Ovary (tissue), 10 donors: ENCODE measurements at regions of chr7 and their contacts with region 1.

Region 1: GRCh38 chr7:45638916-45639315 is 64.7 kb downstream of the ADCY1 start:
- DNase-seq: no peak
- H3K4me3 ChIP-seq: no peak overlapping the region
- H3K27ac ChIP-seq: no peak overlapping the region
- H3K4me1 ChIP-seq: no peaks in the 10 kb centered on the region
- H3K27me3 ChIP-seq: no peaks in the 10 kb centered on the region
- CTCF ChIP-seq: no peak
- EP300 ChIP-seq: no peak
- POLR2A ChIP-seq: no peak

Region 2: DNA sequence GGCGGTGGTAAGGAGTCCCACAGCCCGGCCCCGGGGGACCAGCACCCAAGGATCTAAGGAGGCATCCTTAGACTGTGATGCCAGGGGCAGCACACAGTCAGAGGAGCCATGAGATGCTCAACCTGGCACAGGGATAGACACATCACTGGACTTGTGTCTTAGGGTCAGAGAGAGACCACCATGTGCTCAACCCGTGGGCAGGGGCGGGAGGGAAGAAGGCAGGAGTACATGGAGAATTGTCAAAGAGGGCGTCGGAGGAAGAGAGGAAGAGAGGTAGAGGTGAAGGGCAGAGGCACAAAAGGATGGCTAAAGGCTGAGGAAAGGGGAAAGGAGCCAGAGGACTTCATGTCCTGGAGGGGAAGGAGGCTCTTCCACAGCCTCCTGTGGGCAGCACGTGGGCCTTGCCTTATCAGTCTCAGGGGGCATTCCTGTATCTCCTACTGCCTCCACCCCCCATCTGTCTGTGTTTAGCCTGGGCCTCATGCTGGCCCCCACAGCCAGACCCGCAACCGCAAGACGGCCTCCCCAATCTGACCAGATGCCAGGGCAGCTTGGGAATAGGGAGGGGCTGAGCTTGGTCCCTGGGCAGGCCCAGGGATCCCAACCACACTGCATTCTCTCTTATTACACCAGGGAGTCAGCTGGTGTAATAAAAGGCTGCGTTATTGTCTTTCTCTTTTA is 62.5 kb before region 1 on chr7:
- intact Hi-C with region 1: loop called in 1 of 4 experiments (anchors 2 kb)
- DNase-seq: no peak
- H3K4me3 ChIP-seq: no peak overlapping the region
- H3K27ac ChIP-seq: no peak overlapping the region
- H3K4me1 ChIP-seq: peaks cover 3% of the 10 kb centered on the region
- H3K27me3 ChIP-seq: no peaks in the 10 kb centered on the region
- CTCF ChIP-seq: no peak
- EP300 ChIP-seq: no peak
- POLR2A ChIP-seq: no peak

Region 3: DNA sequence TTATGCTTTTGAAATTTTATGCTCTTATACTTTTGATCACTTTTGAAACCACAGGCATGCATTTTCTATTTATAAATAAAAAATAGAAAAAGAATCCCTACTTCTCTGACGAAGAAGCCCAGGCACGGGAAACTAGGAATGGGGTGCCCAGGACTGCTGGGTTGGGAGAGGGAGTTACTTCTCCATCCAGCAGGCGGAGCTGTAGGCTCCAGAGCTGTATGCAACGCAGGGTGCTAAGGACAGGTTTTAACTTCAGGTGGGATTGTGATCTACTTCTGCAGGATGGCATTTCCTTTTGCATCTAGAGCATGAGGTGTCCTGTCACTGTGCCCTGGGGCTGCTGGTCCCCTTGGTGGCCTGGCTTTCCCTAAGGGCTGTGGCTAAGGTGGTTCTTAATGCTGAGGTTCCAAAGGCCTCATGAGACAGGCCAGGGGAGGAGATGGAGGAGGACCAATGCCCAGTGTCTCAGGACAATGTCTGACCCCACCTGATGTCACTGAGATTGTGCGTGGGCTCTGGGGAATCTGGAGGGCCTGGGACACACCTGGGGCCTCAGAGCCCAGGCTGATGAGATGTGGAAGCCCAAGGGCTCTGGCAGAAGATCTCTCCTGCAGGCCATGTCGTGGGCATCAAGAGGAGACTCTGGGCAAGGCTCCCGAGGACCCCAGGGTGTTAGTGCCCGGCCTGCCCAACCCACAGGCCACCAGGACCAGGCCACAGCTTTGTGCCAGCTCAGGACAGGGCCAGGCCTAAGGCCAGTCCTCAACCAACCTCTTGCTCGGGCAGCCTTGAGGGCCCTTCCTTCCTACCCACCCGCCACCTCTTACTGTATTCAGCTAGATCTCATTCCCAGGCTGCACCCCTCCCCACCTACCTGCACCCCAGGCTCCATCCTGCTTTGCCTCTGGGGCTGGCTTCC is 233.5 kb after region 1 on chr7:
- intact Hi-C with region 1: no loop called
- DNase-seq: no peak
- H3K4me3 ChIP-seq: no peak overlapping the region
- H3K27ac ChIP-seq: no peak overlapping the region
- H3K4me1 ChIP-seq: no peaks in the 10 kb centered on the region
- H3K27me3 ChIP-seq: no peaks in the 10 kb centered on the region
- CTCF ChIP-seq: no peak
- EP300 ChIP-seq: no peak
- POLR2A ChIP-seq: no peak